Naive thymus-derived CD4-positive, alpha-beta T cell (primary cell): ENCODE measurements at regions of chr18 and their contacts with region 1.

Region 1: GRCh38 chr18:32072321-32072720 is 19.4 kb upstream of the RNF138 start:
- DNase-seq: peak in 4 of 9 donors; percentile 34 to 55 (median 45)
- ATAC-seq: peak; percentile 67
- H3K4me3 ChIP-seq: no peak overlapping the region
- H3K4me3 Mint-ChIP-seq: no peak overlapping the region
- H3K27ac ChIP-seq: no peak overlapping the region
- H3K27ac Mint-ChIP-seq: peak overlapping the region in 4 of 9 donors; percentile 15 to 68 (median 30)
- H3K4me1 ChIP-seq: no peaks in the 10 kb centered on the region
- H3K4me1 Mint-ChIP-seq: peaks cover 0 to 30% (median 18%) of the 10 kb centered on the region in 7 donors
- H3K27me3 ChIP-seq: no peaks in the 10 kb centered on the region
- H3K27me3 Mint-ChIP-seq: no peaks in the 10 kb centered on the region

Region 2: GRCh38 chr18:31741097-31741735 is 331.1 kb before region 1 on chr18:
- CTCF ChIA-PET with region 1: no interaction called
- POLR2A ChIA-PET with region 1: no interaction called
- intact Hi-C with region 1: loop called in 1 of 2 experiments (anchors 1 kb)
- DNase-seq: peak in 7 of 9 donors; percentile 12 to 56 (median 46)
- ATAC-seq: peak; percentile 82
- H3K4me3 ChIP-seq: no peak overlapping the region
- H3K4me3 Mint-ChIP-seq: no peak overlapping the region
- H3K27ac ChIP-seq: no peak overlapping the region
- H3K27ac Mint-ChIP-seq: peak overlapping the region in 1 of 9 donors; percentile 14
- H3K4me1 ChIP-seq: no peaks in the 10 kb centered on the region
- H3K4me1 Mint-ChIP-seq: no peaks in the 10 kb centered on the region
- H3K27me3 ChIP-seq: no peaks in the 10 kb centered on the region
- H3K27me3 Mint-ChIP-seq: no peaks in the 10 kb centered on the region

Region 3: GRCh38 chr18:31942999-31943865 is 129.1 kb before region 1 on chr18 and contains the start of gene TRAPPC8:
- CTCF ChIA-PET with region 1: no interaction called
- POLR2A ChIA-PET with region 1: interaction called, 3 read pairs
- intact Hi-C with region 1: loop called (anchors 1 kb)
- DNase-seq: peak; percentile 81 to 94 (median 91)
- ATAC-seq: peak; percentile 91
- H3K4me3 ChIP-seq: peak within 1 kb of the TSS; percentile 98
- H3K4me3 Mint-ChIP-seq: peak within 1 kb of the TSS; percentile 95 to 100 (median 98)
- H3K27ac ChIP-seq: peak within 1 kb of the TSS; percentile 97
- H3K27ac Mint-ChIP-seq: peak within 1 kb of the TSS; percentile 95 to 100 (median 99)
- H3K4me1 ChIP-seq: peaks cover 17 to 26% of the 10 kb centered on the region in 2 donors
- H3K4me1 Mint-ChIP-seq: peaks cover 28 to 54% (median 44%) of the 10 kb centered on the region in 7 donors
- H3K27me3 ChIP-seq: no peaks in the 10 kb centered on the region
- H3K27me3 Mint-ChIP-seq: no peaks in the 10 kb centered on the region
- total RNA-seq, gene TRAPPC8: 31.0 to 62.7 (median 44.3) TPM

Region 4: DNA sequence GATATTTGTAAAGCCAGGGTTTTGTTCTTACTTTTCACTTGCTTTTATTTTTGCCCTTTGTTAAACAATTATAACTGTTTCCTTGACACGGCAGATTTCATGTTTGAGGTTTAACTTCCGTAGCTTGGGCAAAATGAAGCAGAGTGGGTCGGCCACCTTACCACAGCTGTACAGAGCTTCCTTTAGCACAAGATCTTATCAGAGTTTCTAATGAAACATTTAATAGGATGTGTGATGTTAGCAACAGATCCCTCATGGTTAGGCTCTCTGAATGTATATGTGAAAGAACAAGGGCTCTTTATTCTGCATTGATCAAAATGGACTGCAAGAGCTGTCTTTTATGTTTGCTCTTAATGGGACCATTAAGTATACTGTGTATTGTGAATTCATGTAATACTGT is 31.4 kb before region 1 on chr18:
- CTCF ChIA-PET with region 1: interaction called, 3 read pairs
- POLR2A ChIA-PET with region 1: interaction called, 3 read pairs
- intact Hi-C with region 1: loop called in 1 of 2 experiments (anchors 2 kb)
- DNase-seq: peak in 8 of 9 donors; percentile 19 to 66 (median 44)
- ATAC-seq: peak; percentile 87
- H3K4me3 ChIP-seq: peak overlapping the region; percentile 12
- H3K4me3 Mint-ChIP-seq: peak overlapping the region; percentile 14 to 80 (median 73)
- H3K27ac ChIP-seq: peak overlapping the region; percentile 1
- H3K27ac Mint-ChIP-seq: peak overlapping the region; percentile 0 to 85 (median 65)
- H3K4me1 ChIP-seq: peaks cover 25 to 61% of the 10 kb centered on the region in 2 donors
- H3K4me1 Mint-ChIP-seq: peaks cover 35 to 69% (median 61%) of the 10 kb centered on the region in 7 donors
- H3K27me3 ChIP-seq: no peaks in the 10 kb centered on the region
- H3K27me3 Mint-ChIP-seq: no peaks in the 10 kb centered on the region

Region 5: DNA sequence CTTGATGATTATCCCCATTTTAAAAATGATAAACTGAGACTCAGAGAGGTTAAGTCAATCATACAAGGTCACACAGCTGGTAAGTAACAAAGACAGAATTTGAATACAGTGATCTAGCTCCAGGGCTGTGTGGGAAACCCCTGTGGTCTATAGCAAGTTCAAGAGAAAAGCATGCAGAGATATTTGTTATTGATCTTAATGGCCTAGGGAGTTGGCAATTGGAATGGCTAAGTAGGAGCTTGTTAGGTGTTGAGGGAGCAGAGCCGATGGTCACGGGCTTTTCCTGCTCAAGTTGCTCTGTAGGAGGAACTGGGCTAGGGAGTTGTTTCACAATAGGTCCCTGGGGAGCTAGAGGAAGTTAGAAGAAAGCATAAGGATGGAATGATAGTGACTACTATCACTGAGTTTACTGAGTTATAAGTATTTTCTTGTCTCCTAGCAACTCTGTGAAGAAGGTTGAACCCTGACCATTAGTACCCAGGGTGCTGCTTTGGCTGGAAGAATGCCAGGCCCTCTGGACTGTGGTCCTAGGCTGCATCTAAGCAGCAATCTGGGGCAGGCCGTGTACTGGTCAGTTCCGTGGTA is 23.7 kb before region 1 on chr18:
- CTCF ChIA-PET with region 1: interaction called, 4 read pairs
- POLR2A ChIA-PET with region 1: no interaction called
- intact Hi-C with region 1: loop called in 1 of 2 experiments (anchors 2 kb)
- DNase-seq: no peak
- ATAC-seq: peak; percentile 46
- H3K4me3 ChIP-seq: peak overlapping the region; percentile 12
- H3K4me3 Mint-ChIP-seq: peak overlapping the region in 9 of 10 donors; percentile 1 to 83 (median 36)
- H3K27ac ChIP-seq: peak overlapping the region; percentile 2
- H3K27ac Mint-ChIP-seq: peak overlapping the region in 8 of 9 donors; percentile 1 to 89 (median 58)
- H3K4me1 ChIP-seq: peaks cover 21% of the 10 kb centered on the region in 2 donors
- H3K4me1 Mint-ChIP-seq: peaks cover 22 to 54% (median 36%) of the 10 kb centered on the region in 7 donors
- H3K27me3 ChIP-seq: no peaks in the 10 kb centered on the region
- H3K27me3 Mint-ChIP-seq: no peaks in the 10 kb centered on the region

Region 6: GRCh38 chr18:32056613-32057358 is 15.5 kb before region 1 on chr18:
- CTCF ChIA-PET with region 1: interaction called, 7 read pairs
- POLR2A ChIA-PET with region 1: interaction called, 4 read pairs
- intact Hi-C with region 1: loop called in 1 of 2 experiments (anchors 2 kb)
- DNase-seq: no peak
- ATAC-seq: no peak
- H3K4me3 ChIP-seq: no peak overlapping the region
- H3K4me3 Mint-ChIP-seq: peak overlapping the region in 1 of 10 donors; percentile 14
- H3K27ac ChIP-seq: no peak overlapping the region
- H3K27ac Mint-ChIP-seq: peak overlapping the region in 5 of 9 donors; percentile 7 to 71 (median 54)
- H3K4me1 ChIP-seq: peaks cover 10 to 14% of the 10 kb centered on the region in 2 donors
- H3K4me1 Mint-ChIP-seq: peaks cover 16 to 66% (median 56%) of the 10 kb centered on the region in 7 donors
- H3K27me3 ChIP-seq: no peaks in the 10 kb centered on the region
- H3K27me3 Mint-ChIP-seq: no peaks in the 10 kb centered on the region

Region 7: GRCh38 chr18:32114293-32114942 is 42.1 kb after region 1 on chr18:
- CTCF ChIA-PET with region 1: no interaction called
- POLR2A ChIA-PET with region 1: no interaction called
- intact Hi-C with region 1: no loop called
- DNase-seq: no peak
- ATAC-seq: no peak
- H3K4me3 ChIP-seq: no peak overlapping the region
- H3K4me3 Mint-ChIP-seq: no peak overlapping the region
- H3K27ac ChIP-seq: no peak overlapping the region
- H3K27ac Mint-ChIP-seq: peak overlapping the region in 7 of 9 donors; percentile 14 to 86 (median 30)
- H3K4me1 ChIP-seq: peaks cover 0 to 6% of the 10 kb centered on the region in 2 donors
- H3K4me1 Mint-ChIP-seq: peaks cover 24 to 76% (median 68%) of the 10 kb centered on the region in 7 donors
- H3K27me3 ChIP-seq: no peaks in the 10 kb centered on the region
- H3K27me3 Mint-ChIP-seq: no peaks in the 10 kb centered on the region